ENCODE measurements at regions of chr17 and their contacts with region 1.

Region 1: DNA sequence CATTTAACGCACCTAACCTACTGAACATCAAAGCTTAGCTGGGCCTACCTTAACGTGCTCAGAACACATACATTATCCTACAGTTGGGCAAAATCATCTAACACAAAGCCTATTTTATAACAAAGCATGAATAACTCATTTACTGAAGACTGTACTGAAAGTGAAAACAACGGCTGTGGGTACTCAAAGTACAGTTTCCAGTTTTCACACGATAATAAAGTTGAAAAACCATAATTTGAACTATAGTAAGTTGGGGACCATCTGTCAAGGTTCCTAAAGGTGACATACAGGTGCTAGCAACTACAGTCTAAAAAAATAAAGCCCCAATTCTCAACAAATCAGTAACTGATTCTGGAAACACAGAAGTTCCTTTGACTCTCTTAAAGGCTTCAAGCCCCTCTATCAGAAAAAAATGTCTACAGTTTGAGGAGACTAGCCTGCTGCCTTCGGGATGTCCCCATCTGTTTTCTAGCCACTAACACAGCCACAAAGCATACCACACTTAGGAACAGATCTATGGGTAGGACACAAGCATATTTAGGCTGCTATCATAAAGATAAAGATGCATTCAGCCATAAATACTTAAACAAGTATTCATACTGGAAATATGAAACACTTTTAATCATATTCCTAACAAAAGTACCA is 71.3 kb downstream of the KANSL1 start:
- DNase-seq: peak; percentile 32
- CTCF ChIP-seq: no peak

Region 2: GRCh38 chr17:45997624-45998023 is 124.3 kb before region 1 on chr17:
- CTCF ChIA-PET with region 1: no interaction called
- POLR2A ChIA-PET with region 1: no interaction called
- DNase-seq: no peak
- CTCF ChIP-seq: no peak

Region 3: GRCh38 chr17:46061435-46061834 is 60.5 kb before region 1 on chr17:
- CTCF ChIA-PET with region 1: no interaction called
- POLR2A ChIA-PET with region 1: no interaction called
- DNase-seq: no peak
- CTCF ChIP-seq: no peak

Region 4: GRCh38 chr17:46100590-46100989 is 21.4 kb before region 1 on chr17:
- CTCF ChIA-PET with region 1: interaction called, 11 read pairs
- POLR2A ChIA-PET with region 1: no interaction called
- DNase-seq: no peak
- CTCF ChIP-seq: no peak

Region 5: DNA sequence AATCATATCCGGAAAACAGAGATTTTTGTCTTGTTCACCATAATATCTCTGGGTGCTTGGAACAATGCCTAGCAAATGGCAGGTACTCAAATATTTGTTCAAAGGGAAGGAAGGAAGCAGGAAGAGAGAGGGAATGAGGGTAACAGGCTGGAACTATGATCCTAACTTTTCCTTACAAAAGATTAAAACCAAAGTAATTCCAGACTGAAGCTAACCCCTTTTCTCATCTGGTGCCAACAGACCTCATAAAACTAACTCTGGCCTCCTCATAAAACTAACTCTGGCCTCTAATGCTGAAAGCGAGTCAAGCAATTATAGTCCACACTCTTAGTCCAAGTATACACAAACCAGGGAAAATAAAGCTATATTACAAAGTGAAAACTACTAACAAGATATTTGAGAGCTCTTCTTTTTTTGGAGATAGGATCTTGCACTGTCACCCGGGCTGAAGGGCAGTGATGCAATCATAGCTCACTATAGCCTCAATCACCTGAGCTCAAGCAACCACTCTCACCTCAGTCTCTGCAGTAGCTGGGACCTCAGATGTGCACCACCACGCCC is 13.3 kb before region 1 on chr17:
- CTCF ChIA-PET with region 1: interaction called, 11 read pairs
- POLR2A ChIA-PET with region 1: no interaction called
- DNase-seq: no peak
- CTCF ChIP-seq: no peak

Measured in GM10248 (cell line).